ENCODE measurements at regions of chr12 and their contacts with region 1.

Region 1: GRCh38 chr12:6367065-6367968 is 8.0 kb downstream of the SCNN1A start:
- DNase-seq: peak in 1 of 2 experiments; percentile 77
- ATAC-seq: no peak
- H3K4me3 ChIP-seq: no peak overlapping the region
- H3K27ac ChIP-seq: peak overlapping the region; percentile 97 to 99
- H3K4me1 ChIP-seq: peaks cover 64% of the 10 kb centered on the region
- CTCF ChIP-seq: no peak; the same call in 1 of the 3 replicates
- EP300 ChIP-seq: no peak
- POLR2A ChIP-seq: no peak
- RAD21 ChIP-seq: peak; percentile 48 to 57; a peak in 4 of 5 replicates

Region 2: GRCh38 chr12:6341417-6342139 is 25.7 kb before region 1 on chr12 and contains the start of gene TNFRSF1A:
- CTCF ChIA-PET with region 1: interaction called, 705 read pairs
- POLR2A ChIA-PET with region 1: interaction called, 141 read pairs
- DNase-seq: peak; percentile 84 to 91
- ATAC-seq: peak; percentile 60 to 62
- H3K4me3 ChIP-seq: peak within 1 kb of the TSS; percentile 91
- H3K27ac ChIP-seq: peak within 1 kb of the TSS; percentile 95 to 98
- H3K4me1 ChIP-seq: peaks cover 72% of the 10 kb centered on the region
- CTCF ChIP-seq: no peak
- EP300 ChIP-seq: peak in 1 of 2 experiments; percentile 42; a peak in 1 of 5 replicates
- POLR2A ChIP-seq: peak; percentile 58
- RAD21 ChIP-seq: peak in 1 of 2 experiments; percentile 27; a peak in 1 of 5 replicates
- polyA plus RNA-seq, gene TNFRSF1A: 460 and 621 TPM in 2 replicates

Region 3: DNA sequence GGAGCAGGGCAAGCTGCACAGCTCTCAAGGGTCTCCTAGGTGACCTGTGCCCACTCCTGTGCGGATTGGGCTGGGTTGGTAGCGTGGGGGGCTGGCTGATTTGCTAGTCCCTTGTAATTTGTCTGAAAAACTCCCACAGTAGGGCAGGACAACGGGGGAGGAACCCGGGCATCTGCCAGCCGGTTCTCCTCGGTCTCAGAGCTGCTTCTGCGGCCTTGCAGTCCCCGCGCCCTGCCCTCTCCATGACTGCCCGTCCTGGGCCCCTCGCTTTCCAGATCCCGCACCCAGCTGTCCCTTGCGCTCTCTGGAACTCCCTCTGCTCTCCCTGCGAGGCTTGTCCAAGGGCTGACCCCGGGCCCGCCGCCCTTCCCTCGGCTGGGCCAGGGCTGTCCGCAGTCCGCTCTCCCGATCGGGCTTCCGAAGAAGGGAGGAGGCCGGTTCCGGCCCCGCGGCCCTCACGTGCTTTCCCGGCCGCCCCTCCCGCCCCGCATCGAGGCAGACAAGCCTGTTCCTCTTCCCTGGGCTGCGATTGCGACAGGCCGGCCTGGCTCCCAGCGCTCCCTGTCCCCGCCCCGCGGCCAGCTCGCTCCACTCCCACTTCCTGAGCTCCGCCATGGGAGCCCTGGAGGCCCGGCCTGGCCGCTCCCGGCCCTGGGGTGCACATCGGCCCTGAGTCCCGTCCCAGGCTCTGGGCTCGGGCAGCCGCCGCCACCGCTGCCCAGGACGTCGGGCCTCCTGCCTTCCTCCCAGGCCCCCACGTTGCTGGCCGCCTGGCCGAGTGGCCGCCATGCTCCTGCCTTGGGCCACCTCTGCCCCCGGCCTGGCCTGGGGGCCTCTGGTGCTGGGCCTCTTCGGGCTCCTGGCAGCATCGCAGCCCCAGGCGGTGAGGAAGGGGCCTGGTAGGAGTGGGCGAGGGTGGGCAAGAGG is 16.5 kb after region 1 on chr12 and contains the start of gene LTBR:
- CTCF ChIA-PET with region 1: interaction called, 14 read pairs
- POLR2A ChIA-PET with region 1: interaction called, 15 read pairs
- DNase-seq: peak; percentile 83 to 91
- ATAC-seq: peak; percentile 94 to 96
- H3K4me3 ChIP-seq: peak within 1 kb of the TSS; percentile 83
- H3K27ac ChIP-seq: peak within 1 kb of the TSS; percentile 99 to 100
- H3K4me1 ChIP-seq: peaks cover 42% of the 10 kb centered on the region
- CTCF ChIP-seq: no peak
- EP300 ChIP-seq: no peak
- POLR2A ChIP-seq: peak; percentile 66
- RAD21 ChIP-seq: peak in 1 of 2 experiments; percentile 55; a peak in 4 of 5 replicates
- polyA plus RNA-seq, gene LTBR: 57.3 and 63.9 TPM in 2 replicates